Naive thymus-derived CD4-positive, alpha-beta T cell (primary cell): ENCODE measurements at regions of chr9 and their contacts with region 1.

Region 1: GRCh38 chr9:20225841-20226240 is 396.5 kb downstream of the MLLT3 start:
- DNase-seq: no peak
- ATAC-seq: no peak
- H3K4me3 ChIP-seq: peak overlapping the region; percentile 3
- H3K4me3 Mint-ChIP-seq: peak overlapping the region in 3 of 10 donors; percentile 26 to 67 (median 34)
- H3K27ac ChIP-seq: no peak overlapping the region
- H3K27ac Mint-ChIP-seq: peak overlapping the region in 1 of 9 donors; percentile 35
- H3K4me1 ChIP-seq: no peaks in the 10 kb centered on the region
- H3K4me1 Mint-ChIP-seq: peaks cover 15 to 67% (median 43%) of the 10 kb centered on the region in 7 donors
- H3K27me3 ChIP-seq: no peaks in the 10 kb centered on the region
- H3K27me3 Mint-ChIP-seq: peaks cover 0 to 4% (median 0%) of the 10 kb centered on the region in 5 donors

Region 2: GRCh38 chr9:20419533-20419932 is 193.7 kb after region 1 on chr9:
- CTCF ChIA-PET with region 1: no interaction called
- POLR2A ChIA-PET with region 1: interaction called, 10 read pairs
- intact Hi-C with region 1: no loop called
- DNase-seq: no peak
- ATAC-seq: no peak
- H3K4me3 ChIP-seq: no peak overlapping the region
- H3K4me3 Mint-ChIP-seq: no peak overlapping the region
- H3K27ac ChIP-seq: no peak overlapping the region
- H3K27ac Mint-ChIP-seq: peak overlapping the region in 1 of 9 donors; percentile 71
- H3K4me1 ChIP-seq: no peaks in the 10 kb centered on the region
- H3K4me1 Mint-ChIP-seq: peaks cover 16 to 75% (median 59%) of the 10 kb centered on the region in 7 donors
- H3K27me3 ChIP-seq: no peaks in the 10 kb centered on the region
- H3K27me3 Mint-ChIP-seq: no peaks in the 10 kb centered on the region